PC-3 (cell line): ENCODE measurements at regions of chr1 and their contacts with region 1.

Region 1: DNA sequence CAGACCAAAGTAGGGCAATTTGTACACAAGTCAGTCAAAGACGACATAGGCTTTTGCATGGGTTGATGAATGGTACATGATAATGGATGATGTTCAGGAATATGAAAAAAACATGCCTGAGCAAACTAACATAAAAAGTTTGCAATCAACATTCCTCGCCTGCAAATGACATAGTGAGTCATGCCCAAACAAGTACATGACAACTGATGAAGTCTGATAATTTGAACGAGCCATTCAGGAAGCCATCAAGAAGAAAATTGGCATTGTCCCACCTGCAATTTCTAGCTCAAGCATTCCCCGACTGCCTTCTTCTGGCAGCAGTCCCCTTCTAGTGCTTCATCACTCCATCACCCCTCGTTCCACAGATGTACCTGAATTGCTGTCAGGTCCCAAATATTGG is 118.4 kb upstream of the NR5A2 start:
- DNase-seq: peak; percentile 79
- ATAC-seq: peak; percentile 92
- H3K4me3 ChIP-seq: no peak overlapping the region
- H3K27ac ChIP-seq: no peak overlapping the region
- H3K4me1 ChIP-seq: peaks cover 7% of the 10 kb centered on the region
- H3K27me3 ChIP-seq: peaks cover 6% of the 10 kb centered on the region; the same call in 1 of the 2 replicates
- CTCF ChIP-seq: no peak

Region 2: DNA sequence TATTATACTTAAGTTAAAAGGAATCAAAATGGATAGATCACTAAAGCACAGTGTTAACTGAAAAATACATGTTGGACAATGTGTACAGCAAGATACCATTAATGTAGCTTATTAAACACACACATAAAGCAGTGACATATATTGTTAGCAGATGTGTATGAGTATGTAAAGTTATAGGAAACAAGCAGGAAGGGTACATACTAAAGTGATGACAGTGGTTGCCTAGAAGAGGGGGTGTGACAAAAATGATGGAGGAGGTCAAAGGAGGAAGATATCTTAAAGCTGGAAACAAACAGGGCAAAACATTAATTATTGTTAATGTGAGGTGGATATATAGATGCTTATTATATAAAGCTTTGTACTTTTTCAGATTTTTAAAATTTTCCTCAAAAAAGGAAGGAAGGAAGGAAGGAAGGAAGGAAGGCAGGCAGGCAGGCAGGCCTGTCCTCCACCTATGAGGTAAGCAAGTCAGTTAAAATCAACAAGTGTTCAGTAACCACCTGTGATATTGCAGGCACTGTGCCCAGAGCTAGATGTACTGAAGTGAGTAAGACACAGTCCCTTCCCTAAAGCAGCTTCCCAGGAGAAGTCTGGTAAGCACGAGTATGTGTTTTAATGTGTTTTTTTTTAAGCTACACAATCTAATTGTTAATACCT is 134.6 kb before region 1 on chr1:
- CTCF ChIA-PET with region 1: no interaction called
- POLR2A ChIA-PET with region 1: interaction called, 36 read pairs
- intact Hi-C with region 1: no loop called
- DNase-seq: peak; percentile 97
- ATAC-seq: peak; percentile 99
- H3K4me3 ChIP-seq: no peak overlapping the region
- H3K27ac ChIP-seq: no peak overlapping the region
- H3K4me1 ChIP-seq: peaks cover 9% of the 10 kb centered on the region
- H3K27me3 ChIP-seq: no peaks in the 10 kb centered on the region
- CTCF ChIP-seq: no peak

Region 3: DNA sequence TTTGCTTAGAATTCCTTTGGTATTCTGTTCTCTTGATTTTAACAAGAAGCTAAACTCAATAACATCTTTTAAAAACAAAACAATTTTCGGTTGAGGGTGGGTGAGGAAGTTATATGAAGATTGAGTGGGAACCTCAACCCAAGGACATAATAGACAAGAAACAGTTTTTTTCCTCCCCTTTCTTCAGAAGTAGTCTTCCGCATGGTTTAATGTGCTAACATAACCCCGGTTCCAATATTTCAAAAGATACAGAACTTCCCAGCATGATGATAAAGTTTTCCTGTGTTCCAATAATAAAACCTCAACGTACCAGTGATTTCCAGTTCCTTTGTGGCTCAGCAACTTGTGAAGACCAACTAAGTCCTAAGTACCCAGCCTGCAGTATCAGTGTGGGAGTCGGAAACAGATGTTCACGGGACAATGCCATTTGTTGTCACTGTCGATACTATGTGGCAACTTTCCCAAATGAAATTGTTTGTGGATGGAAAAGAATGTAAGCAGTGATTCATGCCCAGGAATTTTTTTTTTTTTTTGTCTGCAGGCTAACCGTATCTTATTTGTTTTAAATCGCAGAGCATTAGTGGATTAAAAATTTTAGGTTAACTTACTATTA is 166.9 kb after region 1 on chr1:
- CTCF ChIA-PET with region 1: no interaction called
- POLR2A ChIA-PET with region 1: no interaction called
- intact Hi-C with region 1: no loop called
- DNase-seq: peak; percentile 100
- ATAC-seq: peak; percentile 96
- H3K4me3 ChIP-seq: peak overlapping the region; percentile 8; the same call in 1 of the 2 replicates
- H3K27ac ChIP-seq: no peak overlapping the region
- H3K4me1 ChIP-seq: peaks cover 14% of the 10 kb centered on the region
- H3K27me3 ChIP-seq: peaks cover 13% of the 10 kb centered on the region
- CTCF ChIP-seq: no peak